ENCODE measurements at regions of chr12 and their contacts with region 1.

Region 1: GRCh38 chr12:113221181-113221997 is at the start of gene TPCN1:
- DNase-seq: peak; percentile 100
- H3K4me3 ChIP-seq: peak within 1 kb of the TSS; percentile 40 to 98 (median 69)
- H3K27ac ChIP-seq: peak within 1 kb of the TSS; percentile 12
- H3K4me1 ChIP-seq: peaks cover 23% of the 10 kb centered on the region
- H3K27me3 ChIP-seq: no peaks in the 10 kb centered on the region
- CTCF ChIP-seq: peak in 1 of 2 donors; percentile 16
- POLR2A ChIP-seq: peak; percentile 96
- total RNA-seq, gene TPCN1: 17.9 and 28.3 TPM in 2 replicates

Region 2: GRCh38 chr12:113184900-113185773 is 36.3 kb before region 1 on chr12 and contains the starts of genes DDX54 and RITA1:
- CTCF ChIA-PET with region 1: interaction called, 3 read pairs
- POLR2A ChIA-PET with region 1: interaction called, 6 read pairs
- dilution Hi-C with region 1: no loop called
- intact Hi-C with region 1: loop called (anchors 2 kb)
- DNase-seq: peak; percentile 93
- H3K4me3 ChIP-seq: peak within 1 kb of the TSS; percentile 45 to 79 (median 76)
- H3K27ac ChIP-seq: peak within 1 kb of the TSS; percentile 67
- H3K4me1 ChIP-seq: peaks cover 12% of the 10 kb centered on the region
- H3K27me3 ChIP-seq: no peaks in the 10 kb centered on the region
- CTCF ChIP-seq: no peak
- POLR2A ChIP-seq: peak; percentile 91
- total RNA-seq, gene DDX54: 76.4 and 90.0 TPM in 2 replicates
- total RNA-seq, gene RITA1: 20.4 and 20.7 TPM in 2 replicates

Region 3: DNA sequence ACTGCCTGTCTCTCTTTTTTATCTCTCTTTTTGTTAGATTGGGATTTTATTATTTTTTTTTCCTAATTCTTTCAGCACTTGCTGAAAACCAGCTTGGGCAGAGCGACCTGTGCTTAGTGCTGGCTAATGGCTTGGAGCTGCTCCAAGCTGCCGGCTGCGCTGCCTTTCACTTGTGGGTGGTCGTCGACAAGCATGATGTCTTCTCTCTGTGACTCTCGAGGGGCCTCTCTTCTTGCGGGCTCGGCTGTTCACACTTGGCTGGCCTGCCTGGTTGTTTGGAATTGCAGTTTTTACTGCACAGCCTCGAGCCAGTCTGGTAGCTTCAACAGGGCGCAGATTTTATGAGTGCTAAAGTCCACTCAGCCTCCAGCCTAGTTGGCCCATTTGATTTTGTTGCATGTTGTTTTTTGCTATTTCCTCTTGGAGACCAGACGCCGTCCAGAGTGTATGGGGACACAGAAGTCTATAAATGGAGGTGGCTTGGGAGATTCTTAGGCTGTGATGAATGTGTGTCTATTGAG is 18.5 kb after region 1 on chr12:
- CTCF ChIA-PET with region 1: interaction called, 5 read pairs
- POLR2A ChIA-PET with region 1: interaction called, 15 read pairs
- dilution Hi-C with region 1: no loop called
- intact Hi-C with region 1: no loop called
- DNase-seq: no peak
- H3K4me3 ChIP-seq: no peak overlapping the region
- H3K27ac ChIP-seq: no peak overlapping the region
- H3K4me1 ChIP-seq: peaks cover 24% of the 10 kb centered on the region
- H3K27me3 ChIP-seq: no peaks in the 10 kb centered on the region
- CTCF ChIP-seq: no peak
- POLR2A ChIP-seq: no peak

Region 4: GRCh38 chr12:113247123-113248055 is 26.0 kb after region 1 on chr12:
- CTCF ChIA-PET with region 1: interaction called, 4 read pairs
- POLR2A ChIA-PET with region 1: interaction called, 8 read pairs
- dilution Hi-C with region 1: no loop called
- intact Hi-C with region 1: loop called (anchors 1 kb)
- DNase-seq: peak; percentile 67
- H3K4me3 ChIP-seq: no peak overlapping the region
- H3K27ac ChIP-seq: peak overlapping the region; percentile 2
- H3K4me1 ChIP-seq: peaks cover 31% of the 10 kb centered on the region
- H3K27me3 ChIP-seq: no peaks in the 10 kb centered on the region
- CTCF ChIP-seq: no peak
- POLR2A ChIP-seq: no peak

Region 5: GRCh38 chr12:113260133-113260967 is 39.0 kb after region 1 on chr12:
- CTCF ChIA-PET with region 1: no interaction called
- POLR2A ChIA-PET with region 1: no interaction called
- dilution Hi-C with region 1: no loop called
- intact Hi-C with region 1: no loop called
- DNase-seq: no peak
- H3K4me3 ChIP-seq: no peak overlapping the region
- H3K27ac ChIP-seq: no peak overlapping the region
- H3K4me1 ChIP-seq: peaks cover 13% of the 10 kb centered on the region
- H3K27me3 ChIP-seq: no peaks in the 10 kb centered on the region
- CTCF ChIP-seq: no peak
- POLR2A ChIP-seq: no peak

Region 6: GRCh38 chr12:113299619-113300237 is 78.3 kb after region 1 on chr12:
- CTCF ChIA-PET with region 1: no interaction called
- POLR2A ChIA-PET with region 1: interaction called, 4 read pairs
- dilution Hi-C with region 1: no loop called
- intact Hi-C with region 1: loop called (anchors 1 kb)
- DNase-seq: peak; percentile 58
- H3K4me3 ChIP-seq: no peak overlapping the region
- H3K27ac ChIP-seq: peak overlapping the region; percentile 65
- H3K4me1 ChIP-seq: peaks cover 6% of the 10 kb centered on the region
- H3K27me3 ChIP-seq: no peaks in the 10 kb centered on the region
- CTCF ChIP-seq: no peak
- POLR2A ChIP-seq: no peak

Region 7: DNA sequence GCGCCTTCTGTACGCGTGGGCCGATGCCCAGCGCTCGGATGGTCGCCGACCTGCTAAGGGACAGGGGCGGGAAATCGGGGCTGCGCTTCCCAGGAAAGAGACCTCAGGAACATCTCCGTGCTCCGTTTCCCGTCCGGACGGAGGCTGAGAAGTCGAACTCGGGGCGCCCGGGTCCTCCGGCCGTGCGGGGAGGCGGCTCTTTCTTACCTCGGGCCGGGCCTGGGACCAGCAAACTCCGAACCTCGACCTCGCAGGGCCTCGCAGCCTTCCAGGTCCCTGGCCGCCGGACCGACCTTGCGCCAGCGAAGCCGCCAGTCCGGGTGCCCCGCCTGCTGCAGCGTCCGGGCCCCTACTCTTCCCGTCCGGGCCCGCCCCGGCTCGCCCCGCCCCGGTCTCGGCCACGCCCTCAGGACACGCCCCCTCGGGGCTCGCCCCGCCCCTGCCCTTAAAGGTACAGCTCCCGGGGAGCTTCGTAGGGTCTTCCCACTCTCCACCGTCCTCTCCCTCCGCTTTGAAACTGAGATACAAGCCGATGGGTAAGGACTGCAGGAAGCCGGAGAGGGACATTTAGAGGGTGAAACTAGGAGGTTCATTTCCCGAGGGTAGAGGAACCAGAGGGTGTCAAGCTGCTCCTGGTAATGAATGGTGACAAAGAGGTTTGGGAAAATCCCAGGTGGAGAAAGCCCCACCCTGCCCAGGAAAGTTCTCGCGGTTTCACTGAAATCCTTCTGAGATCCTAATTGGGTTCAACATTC is 113.6 kb after region 1 on chr12 and contains the start of gene SLC8B1:
- CTCF ChIA-PET with region 1: no interaction called
- POLR2A ChIA-PET with region 1: no interaction called
- dilution Hi-C with region 1: no loop called
- intact Hi-C with region 1: loop called (anchors 10 kb)
- DNase-seq: peak; percentile 75
- H3K4me3 ChIP-seq: peak within 1 kb of the TSS; percentile 70 to 79 (median 78)
- H3K27ac ChIP-seq: peak within 1 kb of the TSS; percentile 30
- H3K4me1 ChIP-seq: peaks cover 18% of the 10 kb centered on the region
- H3K27me3 ChIP-seq: no peaks in the 10 kb centered on the region
- CTCF ChIP-seq: no peak
- POLR2A ChIP-seq: peak; percentile 83
- total RNA-seq, gene SLC8B1: 28.4 and 29.9 TPM in 2 replicates

Region 8: GRCh38 chr12:113358381-113359132 is 137.2 kb after region 1 on chr12 and contains the start of gene PLBD2:
- CTCF ChIA-PET with region 1: interaction called, 3 read pairs
- POLR2A ChIA-PET with region 1: no interaction called
- dilution Hi-C with region 1: no loop called
- intact Hi-C with region 1: loop called (anchors 1 kb)
- DNase-seq: peak; percentile 95
- H3K4me3 ChIP-seq: peak within 1 kb of the TSS; percentile 35 to 62 (median 57)
- H3K27ac ChIP-seq: peak within 1 kb of the TSS; percentile 20
- H3K4me1 ChIP-seq: peaks cover 6% of the 10 kb centered on the region
- H3K27me3 ChIP-seq: no peaks in the 10 kb centered on the region
- CTCF ChIP-seq: no peak
- POLR2A ChIP-seq: peak; percentile 70
- total RNA-seq, gene PLBD2: 44.8 and 46.8 TPM in 2 replicates

Measured in endothelial cell of umbilical vein (primary cell).